ENCODE measurements at regions of chr20 and their contacts with region 1.

Region 1: DNA sequence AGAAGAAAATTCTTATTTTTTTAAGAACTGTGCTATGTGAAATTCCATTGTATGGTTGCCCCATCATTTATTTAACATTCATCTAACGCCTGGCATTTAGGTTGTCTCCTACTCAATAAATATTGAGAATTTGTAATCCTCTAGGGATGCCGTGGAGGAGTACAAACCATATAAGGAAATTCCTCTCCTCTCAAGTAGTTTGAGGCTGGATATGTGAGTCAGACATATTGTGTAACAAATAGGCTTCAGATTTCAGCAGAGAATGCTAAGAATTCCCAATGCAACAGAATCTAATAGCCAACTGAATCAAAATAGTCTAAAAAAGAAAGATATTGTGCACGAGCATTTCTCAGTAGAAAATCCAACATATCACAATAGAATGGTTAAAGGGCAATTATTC is 174.7 kb downstream of the OTOR start:
- DNase-seq: peak; percentile 95
- ATAC-seq: peak; percentile 90
- H3K4me3 ChIP-seq: no peak overlapping the region
- H3K27ac ChIP-seq: peak overlapping the region; percentile 98; the same call in 1 of the 2 replicates
- H3K4me1 ChIP-seq: peaks cover 12% of the 10 kb centered on the region
- H3K27me3 ChIP-seq: no peaks in the 10 kb centered on the region
- CTCF ChIP-seq: no peak
- POLR2A ChIP-seq: no peak
- RAD21 ChIP-seq: no peak

Region 2: DNA sequence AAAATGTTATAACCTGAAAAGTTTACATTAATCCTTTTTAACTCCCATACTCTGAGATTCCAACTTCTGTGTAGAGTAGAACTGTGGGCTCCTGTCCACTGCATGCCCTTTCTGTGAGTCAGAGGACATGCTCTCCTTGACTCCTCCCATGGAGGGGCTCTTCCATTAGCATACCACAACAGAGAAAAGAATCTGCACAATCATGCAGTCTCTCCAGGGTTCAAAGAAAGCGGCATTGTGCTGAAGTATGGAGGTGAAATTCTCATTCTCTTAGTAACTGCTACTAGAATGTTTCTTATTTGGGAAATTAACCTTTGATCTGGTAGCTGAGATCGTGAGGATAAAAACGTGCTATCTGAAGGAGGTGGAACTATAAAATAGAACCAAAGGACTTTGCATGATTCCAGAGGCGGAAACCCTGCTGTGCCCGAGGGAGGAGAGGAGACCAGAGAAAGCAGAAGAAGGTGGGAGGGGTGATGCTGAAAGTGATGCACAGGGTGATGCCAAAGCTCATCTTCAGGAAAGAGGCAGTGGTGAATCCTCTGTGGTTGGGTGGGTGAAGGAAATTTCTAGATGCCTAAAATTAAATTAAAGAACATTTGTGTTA is 101.8 kb after region 1 on chr20:
- CTCF ChIA-PET with region 1: interaction called, 4 read pairs
- POLR2A ChIA-PET with region 1: no interaction called
- dilution Hi-C with region 1: no loop called
- in situ Hi-C with region 1: no loop called
- intact Hi-C with region 1: loop called (anchors 2 kb)
- DNase-seq: peak; percentile 79
- ATAC-seq: peak; percentile 94
- H3K4me3 ChIP-seq: no peak overlapping the region
- H3K27ac ChIP-seq: peak overlapping the region; percentile 83
- H3K4me1 ChIP-seq: peaks cover 12% of the 10 kb centered on the region
- H3K27me3 ChIP-seq: no peaks in the 10 kb centered on the region
- CTCF ChIP-seq: no peak
- POLR2A ChIP-seq: no peak
- RAD21 ChIP-seq: no peak